ENCODE measurements at regions of chr3 and their contacts with region 1.

Region 1: DNA sequence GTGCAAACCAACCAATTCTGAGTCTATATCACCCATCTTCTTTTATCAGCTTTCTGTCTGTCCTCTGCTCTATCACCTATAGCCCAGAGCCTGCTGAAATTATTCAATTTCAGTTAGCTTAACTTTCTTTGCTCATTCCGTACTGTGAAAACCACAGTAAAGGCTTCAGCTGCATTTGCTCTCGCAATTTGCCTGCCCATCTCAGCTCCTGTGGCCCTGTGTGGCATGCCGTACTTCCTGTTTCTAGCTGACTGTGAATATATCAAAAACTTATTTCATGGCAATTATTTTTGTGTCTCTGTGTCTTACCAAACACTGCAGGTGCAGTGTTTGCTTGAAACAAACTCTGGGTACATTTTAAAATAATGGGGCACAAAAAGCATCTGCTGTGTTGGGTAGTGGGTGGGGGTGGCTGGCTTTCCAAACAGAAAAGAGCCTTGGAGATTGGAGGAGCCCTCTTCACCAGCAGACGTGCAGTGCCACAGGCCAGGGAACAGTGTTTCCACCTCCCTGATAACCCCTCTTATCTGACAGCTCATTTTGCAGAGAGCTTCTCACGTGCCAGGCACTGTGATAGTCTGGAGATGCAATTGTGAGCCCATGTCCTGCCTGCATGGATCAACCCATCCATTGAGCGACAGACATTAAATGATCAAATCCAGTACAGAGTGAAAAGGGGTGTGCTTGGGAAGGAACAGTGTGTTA is 45.2 kb downstream of the GASK1A start:
- DNase-seq: peak in 7 of 9 donors; percentile 58 to 86 (median 79)
- ATAC-seq: peak; percentile 93
- H3K4me3 ChIP-seq: peak overlapping the region; percentile 33
- H3K4me3 Mint-ChIP-seq: peak overlapping the region; percentile 68 to 86 (median 82)
- H3K27ac ChIP-seq: peak overlapping the region; percentile 70
- H3K27ac Mint-ChIP-seq: peak overlapping the region in 8 of 9 donors; percentile 51 to 97 (median 92)
- H3K4me1 ChIP-seq: peaks cover 55 to 68% of the 10 kb centered on the region in 2 donors
- H3K4me1 Mint-ChIP-seq: peaks cover 9 to 88% (median 57%) of the 10 kb centered on the region in 7 donors
- H3K27me3 ChIP-seq: no peaks in the 10 kb centered on the region
- H3K27me3 Mint-ChIP-seq: peaks cover 0 to 11% (median 0%) of the 10 kb centered on the region in 5 donors

Region 2: GRCh38 chr3:42979044-42979972 is 45.0 kb before region 1 on chr3 and contains the start of gene GASK1A:
- CTCF ChIA-PET with region 1: no interaction called
- POLR2A ChIA-PET with region 1: no interaction called
- intact Hi-C with region 1: loop called in 1 of 2 experiments (anchors 5 kb)
- DNase-seq: peak in 7 of 9 donors; percentile 11 to 30 (median 22)
- ATAC-seq: peak; percentile 50
- H3K4me3 ChIP-seq: peak within 1 kb of the TSS; percentile 46
- H3K4me3 Mint-ChIP-seq: peak within 1 kb of the TSS; percentile 54 to 83 (median 80)
- H3K27ac ChIP-seq: no peak within 1 kb of the TSS
- H3K27ac Mint-ChIP-seq: no peak within 1 kb of the TSS
- H3K4me1 ChIP-seq: peaks cover 0 to 4% of the 10 kb centered on the region in 2 donors
- H3K4me1 Mint-ChIP-seq: peaks cover 0 to 16% (median 7%) of the 10 kb centered on the region in 7 donors
- H3K27me3 ChIP-seq: no peaks in the 10 kb centered on the region
- H3K27me3 Mint-ChIP-seq: peaks cover 21 to 51% (median 37%) of the 10 kb centered on the region in 5 donors
- total RNA-seq, gene GASK1A: 0.20 to 0.24 TPM in 2 of 5 experiments, not detected in the others

Region 3: DNA sequence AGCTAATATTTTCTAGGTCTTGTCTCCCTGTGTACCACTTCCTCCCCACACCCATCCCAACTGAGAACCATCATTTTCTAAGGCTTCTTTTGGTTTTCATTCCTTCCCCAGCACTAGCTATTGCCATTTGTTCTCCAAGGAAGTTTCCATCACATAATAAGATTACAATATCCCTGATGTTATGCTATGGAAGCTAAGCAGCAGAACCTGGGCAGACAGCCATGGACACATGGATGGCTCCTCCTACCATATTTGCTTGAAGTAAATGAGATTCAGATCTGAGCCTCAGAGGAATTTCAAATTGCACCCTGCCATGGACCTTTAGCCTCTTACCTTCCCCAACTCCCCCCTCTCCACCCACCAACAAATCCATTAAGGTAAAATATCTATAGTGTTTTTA is 13.7 kb before region 1 on chr3:
- CTCF ChIA-PET with region 1: interaction called, 4 read pairs
- POLR2A ChIA-PET with region 1: interaction called, 9 read pairs
- intact Hi-C with region 1: loop called in 1 of 2 experiments (anchors 2 kb)
- DNase-seq: no peak
- ATAC-seq: no peak
- H3K4me3 ChIP-seq: no peak overlapping the region
- H3K4me3 Mint-ChIP-seq: no peak overlapping the region
- H3K27ac ChIP-seq: no peak overlapping the region
- H3K27ac Mint-ChIP-seq: peak overlapping the region in 1 of 9 donors; percentile 65
- H3K4me1 ChIP-seq: peaks cover 0 to 29% of the 10 kb centered on the region in 2 donors
- H3K4me1 Mint-ChIP-seq: peaks cover 0 to 46% (median 26%) of the 10 kb centered on the region in 7 donors
- H3K27me3 ChIP-seq: no peaks in the 10 kb centered on the region
- H3K27me3 Mint-ChIP-seq: no peaks in the 10 kb centered on the region

Region 4: DNA sequence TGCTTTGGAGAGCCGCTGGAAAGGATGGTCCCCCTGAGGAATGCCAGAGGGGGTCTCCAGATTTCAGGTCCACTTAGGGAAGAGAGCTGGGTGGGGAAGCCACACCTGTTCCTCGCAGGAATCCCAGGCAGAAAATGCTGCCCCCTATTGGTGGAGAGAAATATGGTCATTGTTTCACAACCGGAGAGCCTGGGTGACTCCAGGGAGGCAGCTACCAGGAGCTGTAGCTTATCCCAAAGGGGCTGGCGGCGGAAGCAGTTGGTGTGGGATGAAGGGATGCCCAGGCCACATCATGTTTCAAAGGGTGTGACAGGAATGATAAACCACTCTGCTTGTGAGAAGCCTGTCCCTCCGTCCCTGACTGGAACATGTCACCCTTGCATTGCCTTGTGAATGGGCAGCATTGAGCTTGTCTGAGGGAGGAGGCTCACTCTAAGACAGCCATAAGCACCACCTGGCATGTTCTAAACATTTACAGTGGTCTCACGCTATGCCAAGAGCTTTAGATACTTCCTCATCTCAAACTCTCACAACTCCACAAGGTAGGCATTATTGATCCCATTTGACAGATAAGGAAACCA is 47.1 kb after region 1 on chr3:
- CTCF ChIA-PET with region 1: no interaction called
- POLR2A ChIA-PET with region 1: no interaction called
- intact Hi-C with region 1: loop called in 1 of 2 experiments (anchors 5 kb)
- DNase-seq: peak in 6 of 9 donors; percentile 18 to 49 (median 30)
- ATAC-seq: no peak
- H3K4me3 ChIP-seq: no peak overlapping the region
- H3K4me3 Mint-ChIP-seq: no peak overlapping the region
- H3K27ac ChIP-seq: no peak overlapping the region
- H3K27ac Mint-ChIP-seq: no peak overlapping the region
- H3K4me1 ChIP-seq: no peaks in the 10 kb centered on the region
- H3K4me1 Mint-ChIP-seq: peaks cover 0 to 7% (median 0%) of the 10 kb centered on the region in 7 donors
- H3K27me3 ChIP-seq: no peaks in the 10 kb centered on the region
- H3K27me3 Mint-ChIP-seq: peaks cover 0 to 7% (median 0%) of the 10 kb centered on the region in 5 donors

Region 5: DNA sequence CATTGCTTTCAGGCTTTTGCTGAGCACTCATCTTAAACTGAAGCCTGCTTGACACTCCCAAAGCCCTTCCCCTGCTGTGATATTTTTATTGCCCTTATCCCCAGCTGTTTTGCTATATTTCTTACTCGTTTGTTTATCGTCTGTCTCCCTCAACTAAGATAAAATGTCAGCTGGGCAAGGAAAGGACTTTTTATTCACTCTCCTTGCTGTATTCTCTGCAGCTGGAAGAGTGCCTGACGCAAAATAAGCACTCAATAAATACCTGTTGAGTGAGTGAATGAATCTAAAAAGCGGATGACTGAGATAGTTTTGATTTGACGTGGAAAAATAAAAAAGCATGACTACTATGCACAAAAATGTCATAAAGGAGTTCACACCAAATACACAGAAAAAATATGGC is 166.3 kb after region 1 on chr3:
- CTCF ChIA-PET with region 1: no interaction called
- POLR2A ChIA-PET with region 1: no interaction called
- intact Hi-C with region 1: loop called in 1 of 2 experiments (anchors 10 kb)
- DNase-seq: no peak
- ATAC-seq: no peak
- H3K4me3 ChIP-seq: no peak overlapping the region
- H3K4me3 Mint-ChIP-seq: no peak overlapping the region
- H3K27ac ChIP-seq: no peak overlapping the region
- H3K27ac Mint-ChIP-seq: peak overlapping the region in 4 of 9 donors; percentile 1 to 66 (median 34)
- H3K4me1 ChIP-seq: peaks cover 32 to 46% of the 10 kb centered on the region in 2 donors
- H3K4me1 Mint-ChIP-seq: peaks cover 25 to 70% (median 58%) of the 10 kb centered on the region in 7 donors
- H3K27me3 ChIP-seq: no peaks in the 10 kb centered on the region
- H3K27me3 Mint-ChIP-seq: peaks cover 0 to 30% (median 0%) of the 10 kb centered on the region in 5 donors

Measured in naive thymus-derived CD4-positive, alpha-beta T cell (primary cell).